PC-3 (cell line): ENCODE measurements at regions of chr17 and their contacts with region 1.

Region 1: DNA sequence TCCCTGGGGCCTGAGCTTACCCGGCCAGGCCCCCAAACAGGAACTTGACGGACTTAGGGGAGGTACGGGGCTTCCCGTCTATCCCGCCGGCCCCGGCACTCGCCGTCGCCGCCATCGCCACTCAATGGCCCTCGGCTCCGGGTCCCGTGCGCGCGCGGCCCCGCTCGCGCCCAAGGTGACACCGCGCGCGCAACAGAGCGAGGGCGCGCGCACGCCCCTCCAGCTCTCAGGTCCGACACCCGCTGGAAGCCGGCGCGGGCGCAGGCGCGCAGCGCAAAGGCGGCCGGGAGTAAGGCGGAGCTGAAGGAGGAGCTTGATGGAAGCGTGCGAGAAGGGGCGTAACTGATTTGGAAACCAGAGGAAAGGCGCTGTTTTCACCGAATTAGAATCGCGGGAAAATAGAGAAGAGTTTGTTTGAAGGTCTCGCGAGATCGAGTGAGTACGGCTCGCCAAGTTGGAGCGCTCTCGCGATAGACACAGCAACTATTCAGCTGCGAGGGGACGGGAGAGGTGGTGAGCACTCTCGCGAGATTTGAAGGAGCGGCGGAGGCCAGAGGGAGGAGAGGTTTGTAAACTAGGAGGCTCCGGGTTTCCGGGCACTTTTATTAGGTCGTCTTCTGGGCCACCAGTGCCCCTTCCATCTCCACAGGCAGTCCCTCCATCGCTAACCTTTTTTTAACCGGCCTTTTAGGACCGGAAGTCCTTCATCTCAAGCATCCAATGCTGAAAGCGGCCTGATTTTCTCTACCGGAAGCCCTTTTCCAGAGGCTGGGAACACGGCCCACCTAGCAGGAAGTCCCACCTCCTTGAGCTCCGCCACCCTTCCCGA is at the starts of genes RNF167 and SLC25A11:
- DNase-seq: peak; percentile 97
- ATAC-seq: peak; percentile 79
- H3K4me3 ChIP-seq: peak within 1 kb of the TSS; percentile 91
- H3K27ac ChIP-seq: peak within 1 kb of the TSS; percentile 87
- H3K4me1 ChIP-seq: peaks cover 26% of the 10 kb centered on the region
- H3K27me3 ChIP-seq: no peaks in the 10 kb centered on the region
- CTCF ChIP-seq: no peak
- total RNA-seq, gene RNF167: 37.8 and 43.1 TPM in 2 replicates
- total RNA-seq, gene SLC25A11: 64.3 and 72.1 TPM in 2 replicates

Region 2: DNA sequence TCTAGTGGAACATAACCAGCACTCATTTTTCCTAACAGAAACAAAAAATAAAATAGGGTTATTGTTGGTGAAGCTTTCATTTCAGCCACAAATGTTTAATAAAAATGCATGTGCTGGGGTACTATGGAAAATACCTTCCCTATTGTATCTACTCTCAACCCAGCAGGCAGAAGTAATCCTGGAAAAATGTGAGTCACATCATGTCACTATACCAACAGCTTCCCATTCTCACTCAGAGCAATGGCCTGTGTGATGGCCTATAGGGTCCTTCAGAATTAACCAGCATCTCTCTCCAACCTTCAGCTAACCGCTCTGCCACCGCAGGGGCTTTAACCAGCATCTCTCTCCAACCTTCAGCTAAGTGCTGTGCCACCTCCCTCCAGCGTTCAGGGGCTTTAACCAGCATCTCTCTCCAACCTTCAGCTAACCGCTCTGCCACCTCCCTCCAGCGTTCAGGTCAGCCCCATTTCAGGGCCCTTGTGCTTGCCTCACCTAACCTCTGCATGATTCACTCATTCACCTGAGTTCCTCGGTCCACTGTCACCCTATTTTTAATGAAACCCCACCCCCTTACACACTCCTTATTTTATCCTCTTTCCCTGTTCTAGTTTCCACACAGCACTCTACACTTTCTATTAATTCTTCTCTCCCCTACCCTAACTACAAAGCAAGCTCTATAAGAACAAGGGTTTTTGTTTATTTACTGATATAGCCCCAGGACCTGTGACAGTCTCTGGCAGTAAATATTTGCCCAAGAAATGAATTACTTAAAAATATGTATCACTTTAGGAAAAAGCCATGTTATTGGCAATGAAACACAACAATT is 607.5 kb before region 1 on chr17:
- CTCF ChIA-PET with region 1: no interaction called
- POLR2A ChIA-PET with region 1: interaction called, 17 read pairs
- intact Hi-C with region 1: no loop called
- DNase-seq: peak; percentile 47
- ATAC-seq: peak; percentile 41
- H3K4me3 ChIP-seq: no peak overlapping the region
- H3K27ac ChIP-seq: peak overlapping the region; percentile 40
- H3K4me1 ChIP-seq: peaks cover 54% of the 10 kb centered on the region
- H3K27me3 ChIP-seq: no peaks in the 10 kb centered on the region
- CTCF ChIP-seq: no peak

Region 3: DNA sequence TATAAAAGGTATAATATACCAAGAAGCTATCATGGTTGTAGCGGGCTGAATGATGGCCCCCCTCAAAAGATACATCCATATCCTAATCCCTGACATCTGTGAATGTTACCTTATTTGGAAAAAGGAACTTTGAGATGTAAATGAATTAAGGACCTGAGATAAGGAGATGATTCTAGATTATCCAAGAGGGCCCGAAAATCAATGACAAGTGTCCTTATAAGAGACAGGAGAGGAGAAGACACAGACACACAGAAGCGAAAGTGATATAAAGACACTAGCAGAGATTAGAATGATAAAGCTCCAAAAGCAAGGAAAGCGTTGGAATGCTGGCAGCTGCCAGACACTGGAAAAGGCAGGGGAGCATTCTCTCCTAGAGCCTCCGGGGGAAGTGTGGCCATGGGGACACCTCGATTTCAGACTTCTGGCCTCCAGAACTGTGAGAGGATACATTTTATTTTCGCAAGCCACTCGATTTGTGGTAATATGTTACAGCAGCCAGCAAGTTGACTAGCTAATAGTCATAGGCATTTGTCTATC is 20.4 kb before region 1 on chr17:
- CTCF ChIA-PET with region 1: no interaction called
- POLR2A ChIA-PET with region 1: no interaction called
- intact Hi-C with region 1: no loop called
- DNase-seq: no peak
- ATAC-seq: no peak
- H3K4me3 ChIP-seq: no peak overlapping the region
- H3K27ac ChIP-seq: no peak overlapping the region
- H3K4me1 ChIP-seq: no peaks in the 10 kb centered on the region
- H3K27me3 ChIP-seq: no peaks in the 10 kb centered on the region
- CTCF ChIP-seq: no peak